ENCODE measurements at regions of chr7 and their contacts with region 1.

Region 1: DNA sequence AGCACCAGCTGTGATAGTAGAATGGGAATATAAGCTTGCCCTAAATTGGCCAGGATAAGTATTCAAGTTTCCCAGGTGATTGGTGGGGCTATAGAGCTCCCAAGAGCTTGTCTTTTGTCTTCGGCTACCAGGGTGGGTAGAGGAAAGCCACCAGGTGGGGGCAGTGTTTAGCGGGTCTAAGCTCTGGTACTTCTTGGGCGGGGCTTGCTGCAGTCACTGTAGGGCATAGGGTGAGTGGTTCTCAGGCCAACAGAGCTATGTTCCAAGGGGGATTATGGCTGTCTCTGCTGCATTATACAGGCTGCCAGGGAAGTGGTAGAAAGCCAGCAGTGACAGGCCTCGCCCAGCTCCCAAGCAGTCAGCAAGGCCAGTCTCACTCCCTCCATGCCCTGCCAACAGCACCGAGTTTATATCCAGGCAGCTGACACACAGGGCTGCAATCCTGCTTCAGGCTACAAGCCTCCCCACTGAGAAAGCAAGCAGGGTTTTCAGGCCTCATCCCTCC is 110.7 kb downstream of the ZNF467 start:
- DNase-seq: peak; percentile 82
- ATAC-seq: peak; percentile 99
- H3K4me3 ChIP-seq: no peak overlapping the region
- H3K27ac ChIP-seq: no peak overlapping the region
- H3K4me1 ChIP-seq: peaks cover 0 to 16% of the 10 kb centered on the region in 2 experiments; a peak in 1 of 4 replicates
- H3K27me3 ChIP-seq: no peaks in the 10 kb centered on the region
- CTCF ChIP-seq: peak; percentile 79 to 91 (median 84)
- POLR2A ChIP-seq: no peak
- RAD21 ChIP-seq: peak; percentile 82

Region 2: DNA sequence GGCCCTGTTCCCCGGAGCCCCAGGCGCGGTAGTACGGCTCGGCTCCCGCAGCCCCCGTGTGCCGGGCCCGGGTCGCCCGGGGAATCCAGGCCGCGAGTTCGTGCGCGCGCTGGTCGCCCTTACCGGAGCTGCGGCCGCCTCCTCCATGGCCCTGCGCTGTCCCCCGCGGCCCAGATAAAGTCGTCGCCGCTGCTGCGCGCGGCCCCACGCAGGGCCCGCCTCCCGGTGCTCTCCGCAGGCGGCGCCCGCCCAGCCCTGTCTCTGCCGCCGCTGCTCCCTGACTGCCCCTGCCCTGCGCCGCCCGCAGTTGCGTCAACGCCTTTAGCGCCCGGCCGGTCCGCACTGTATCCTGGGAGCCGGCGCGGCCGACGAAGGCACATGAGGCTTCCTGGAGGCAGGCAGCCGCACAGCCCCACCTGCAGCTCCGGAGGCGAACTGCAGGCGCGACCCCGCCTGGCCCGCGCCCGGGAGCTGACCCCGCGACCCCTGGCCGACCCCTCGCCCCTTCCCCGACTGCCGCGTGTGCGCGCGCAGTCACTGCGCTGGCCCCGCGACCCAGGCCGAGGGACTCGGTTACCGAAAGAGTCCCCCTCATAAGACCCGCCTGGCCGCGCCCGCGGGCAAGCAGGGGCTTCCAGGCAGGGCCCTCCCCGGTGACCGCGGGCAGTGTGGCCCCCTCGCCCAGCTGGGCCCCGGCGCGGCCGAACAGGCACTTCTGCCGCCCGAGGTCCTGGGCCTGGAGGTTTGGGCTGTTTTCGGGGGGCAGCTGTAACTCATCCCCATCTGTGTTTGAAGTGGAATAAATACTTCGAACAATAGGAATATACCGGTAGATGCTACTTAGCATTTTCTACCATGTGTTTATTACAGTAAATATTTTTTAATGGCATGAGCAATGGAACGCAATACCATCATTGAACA is 38.0 kb before region 1 on chr7:
- CTCF ChIA-PET with region 1: interaction called, 27 read pairs
- POLR2A ChIA-PET with region 1: interaction called, 3 read pairs
- RAD21 ChIA-PET with region 1: no interaction called
- intact Hi-C with region 1: no loop called
- DNase-seq: peak; percentile 81
- ATAC-seq: peak; percentile 94
- H3K4me3 ChIP-seq: peak overlapping the region; percentile 64 to 86
- H3K27ac ChIP-seq: peak overlapping the region; percentile 84
- H3K4me1 ChIP-seq: peaks cover 5 to 19% of the 10 kb centered on the region in 2 experiments; a peak in 3 of 4 replicates
- H3K27me3 ChIP-seq: no peaks in the 10 kb centered on the region
- CTCF ChIP-seq: peak; percentile 62 to 77 (median 74)
- POLR2A ChIP-seq: peak; percentile 51
- RAD21 ChIP-seq: peak; percentile 21; the same call in 1 of the 2 replicates

Region 3: DNA sequence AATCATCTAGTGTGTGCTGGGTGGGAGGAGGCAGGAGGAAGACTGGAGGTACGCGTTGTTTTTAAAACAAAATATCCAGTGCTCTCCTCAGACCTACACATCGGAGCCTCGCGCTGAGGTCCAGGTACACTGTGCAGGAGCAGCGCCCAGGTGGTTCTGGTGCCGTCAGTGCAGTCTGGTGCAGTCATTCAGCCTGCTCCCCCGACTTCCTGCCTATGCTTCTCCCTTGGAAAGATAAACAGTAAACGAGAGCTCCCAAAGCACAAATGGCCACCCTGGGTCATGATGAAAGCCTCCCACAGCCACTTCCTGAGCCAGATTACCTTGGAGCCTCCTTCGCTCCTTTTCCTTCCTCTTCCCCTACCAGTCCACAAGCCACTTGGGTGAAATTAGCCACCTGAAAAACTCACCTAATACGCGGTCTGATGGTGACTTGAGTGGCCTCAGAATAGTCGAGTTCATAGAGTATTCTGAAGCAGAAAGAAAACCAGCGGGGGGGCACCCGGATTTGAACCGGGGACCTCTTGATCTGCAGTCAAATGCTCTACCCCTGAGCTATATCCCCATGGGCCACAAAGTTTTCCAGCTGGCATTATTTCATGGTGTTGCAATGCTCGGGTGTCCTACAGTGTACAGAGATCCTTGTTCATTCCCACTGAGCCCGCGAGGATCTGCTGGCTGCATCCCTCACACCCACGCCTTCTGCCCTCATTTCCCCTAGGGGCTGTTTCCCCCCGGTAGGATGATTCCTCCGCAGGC is 28.2 kb after region 1 on chr7:
- CTCF ChIA-PET with region 1: interaction called, 13 read pairs
- POLR2A ChIA-PET with region 1: no interaction called
- RAD21 ChIA-PET with region 1: no interaction called
- intact Hi-C with region 1: loop called (anchors 2 kb)
- DNase-seq: peak; percentile 89
- ATAC-seq: peak; percentile 94
- H3K4me3 ChIP-seq: no peak overlapping the region
- H3K27ac ChIP-seq: peak overlapping the region; percentile 29; the same call in 1 of the 2 replicates
- H3K4me1 ChIP-seq: peaks cover 5 to 12% of the 10 kb centered on the region in 2 experiments
- H3K27me3 ChIP-seq: peaks cover under 1% of the 10 kb centered on the region; the same call in 1 of the 2 replicates
- CTCF ChIP-seq: no peak
- POLR2A ChIP-seq: no peak
- RAD21 ChIP-seq: no peak

Region 4: GRCh38 chr7:149704507-149704906 is 41.9 kb after region 1 on chr7:
- CTCF ChIA-PET with region 1: interaction called, 26 read pairs
- POLR2A ChIA-PET with region 1: no interaction called
- RAD21 ChIA-PET with region 1: interaction called, 5 to 9 read pairs
- intact Hi-C with region 1: loop called (anchors 5 kb)
- DNase-seq: no peak
- ATAC-seq: no peak
- H3K4me3 ChIP-seq: no peak overlapping the region
- H3K27ac ChIP-seq: no peak overlapping the region
- H3K4me1 ChIP-seq: no peaks in the 10 kb centered on the region
- H3K27me3 ChIP-seq: no peaks in the 10 kb centered on the region
- CTCF ChIP-seq: no peak
- POLR2A ChIP-seq: no peak
- RAD21 ChIP-seq: no peak

Region 5: GRCh38 chr7:149742075-149742701 is 79.5 kb after region 1 on chr7:
- CTCF ChIA-PET with region 1: interaction called, 62 read pairs
- POLR2A ChIA-PET with region 1: interaction called, 6 read pairs
- RAD21 ChIA-PET with region 1: interaction called, 13 to 20 read pairs
- intact Hi-C with region 1: loop called (anchors 1 kb)
- DNase-seq: peak; percentile 47
- ATAC-seq: peak; percentile 95
- H3K4me3 ChIP-seq: peak overlapping the region; percentile 51 to 57
- H3K27ac ChIP-seq: no peak overlapping the region
- H3K4me1 ChIP-seq: peaks cover 5 to 13% of the 10 kb centered on the region in 2 experiments; a peak in 3 of 4 replicates
- H3K27me3 ChIP-seq: no peaks in the 10 kb centered on the region
- CTCF ChIP-seq: peak; percentile 88 to 92 (median 92)
- POLR2A ChIP-seq: no peak
- RAD21 ChIP-seq: peak; percentile 89

Region 6: GRCh38 chr7:149753401-149754233 is 91.0 kb after region 1 on chr7:
- CTCF ChIA-PET with region 1: interaction called, 9 read pairs
- POLR2A ChIA-PET with region 1: no interaction called
- RAD21 ChIA-PET with region 1: no interaction called
- intact Hi-C with region 1: loop called (anchors 1 kb)
- DNase-seq: peak; percentile 36
- ATAC-seq: peak; percentile 95
- H3K4me3 ChIP-seq: no peak overlapping the region
- H3K27ac ChIP-seq: no peak overlapping the region
- H3K4me1 ChIP-seq: 0 out of 4 replicates have a peak, but pooled peaks cover 0 to under 1% of the 10 kb centered on the region in 2 experiments
- H3K27me3 ChIP-seq: no peaks in the 10 kb centered on the region
- CTCF ChIP-seq: peak; percentile 79 to 85 (median 85)
- POLR2A ChIP-seq: no peak
- RAD21 ChIP-seq: peak; percentile 78

Region 7: DNA sequence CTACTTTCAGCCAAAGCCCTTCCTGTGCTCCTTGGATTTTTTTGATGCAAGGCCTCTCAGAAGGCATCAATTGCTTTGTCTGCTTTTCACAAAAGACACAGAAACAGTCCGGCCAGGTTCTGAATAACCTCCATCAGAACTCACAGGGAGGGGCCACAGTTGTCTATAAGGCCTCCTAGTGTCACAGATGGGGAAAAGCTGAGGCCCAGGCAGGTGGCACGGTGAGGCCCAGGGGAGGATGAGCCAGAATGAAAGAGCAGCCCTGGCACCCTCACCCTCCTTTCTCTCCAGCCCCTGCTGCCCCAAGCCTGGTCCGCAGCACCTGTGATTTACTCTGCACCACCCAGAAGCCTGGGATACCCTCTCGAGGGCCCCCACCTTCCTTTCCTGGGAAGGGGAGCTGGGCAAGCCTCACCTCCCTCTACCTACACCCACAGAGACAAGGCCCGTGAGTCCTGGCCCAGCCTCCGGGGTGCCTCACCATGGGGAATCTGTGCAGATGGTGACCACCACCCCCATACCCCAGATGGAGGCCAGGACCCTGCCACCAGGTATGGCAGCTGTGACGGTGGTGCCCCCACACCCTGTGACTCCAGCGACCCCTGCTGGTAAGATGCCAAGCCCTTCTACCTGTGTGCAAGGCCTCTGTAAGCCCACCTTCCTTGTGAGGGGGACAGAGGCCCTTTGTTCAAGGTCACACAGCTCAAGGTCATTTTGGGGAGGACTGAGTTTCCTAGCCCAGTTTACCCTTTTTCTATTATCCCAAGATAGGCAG is 136.9 kb after region 1 on chr7:
- CTCF ChIA-PET with region 1: interaction called, 10 read pairs
- POLR2A ChIA-PET with region 1: no interaction called
- RAD21 ChIA-PET with region 1: interaction called, 4 read pairs
- intact Hi-C with region 1: loop called (anchors 1 kb)
- DNase-seq: no peak
- ATAC-seq: peak; percentile 54
- H3K4me3 ChIP-seq: no peak overlapping the region
- H3K27ac ChIP-seq: no peak overlapping the region
- H3K4me1 ChIP-seq: no peaks in the 10 kb centered on the region
- H3K27me3 ChIP-seq: no peaks in the 10 kb centered on the region
- CTCF ChIP-seq: peak; percentile 35 to 65 (median 57); a peak in 5 of 6 replicates
- POLR2A ChIP-seq: no peak
- RAD21 ChIP-seq: peak; percentile 77